AG04450 (cell line): ENCODE measurements at regions of chr5 and their contacts with region 1.

Region 1: DNA sequence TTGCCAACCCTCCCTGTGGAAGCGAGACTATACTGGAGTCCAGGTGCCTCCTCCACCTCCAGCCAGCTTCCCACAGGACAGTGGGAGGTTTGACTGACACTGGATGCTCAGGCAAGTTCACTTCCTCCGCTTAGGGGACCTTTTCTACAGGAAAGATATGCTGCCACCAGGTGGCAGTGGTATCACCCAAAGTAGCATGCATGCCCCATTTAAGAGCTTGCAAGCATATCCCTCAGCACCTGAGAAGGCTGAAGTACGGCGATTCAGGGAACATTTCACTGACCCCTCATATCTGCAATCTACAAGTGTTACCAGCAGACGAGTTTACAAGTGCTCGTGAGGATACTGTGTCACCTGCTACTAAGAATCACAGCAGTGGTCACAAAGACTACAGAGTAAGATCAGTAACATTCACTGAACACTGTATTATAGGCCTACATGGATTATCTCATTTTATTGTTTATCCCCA is 75.5 kb downstream of the KLHL3 start:
- DNase-seq: peak; percentile 67
- H3K4me3 ChIP-seq: no peak overlapping the region
- H3K27ac ChIP-seq: no peak overlapping the region
- H3K27me3 ChIP-seq: no peaks in the 10 kb centered on the region
- CTCF ChIP-seq: peak; percentile 86

Region 2: GRCh38 chr5:137619191-137619870 is 41.1 kb before region 1 on chr5:
- CTCF ChIA-PET with region 1: interaction called, 12 read pairs
- POLR2A ChIA-PET with region 1: no interaction called
- DNase-seq: peak; percentile 18
- H3K4me3 ChIP-seq: no peak overlapping the region
- H3K27ac ChIP-seq: no peak overlapping the region
- H3K27me3 ChIP-seq: no peaks in the 10 kb centered on the region
- CTCF ChIP-seq: no peak

Region 3: GRCh38 chr5:137635521-137635921 is 24.9 kb before region 1 on chr5:
- CTCF ChIA-PET with region 1: interaction called, 43 read pairs
- POLR2A ChIA-PET with region 1: no interaction called
- DNase-seq: no peak
- H3K4me3 ChIP-seq: no peak overlapping the region
- H3K27ac ChIP-seq: no peak overlapping the region
- H3K27me3 ChIP-seq: no peaks in the 10 kb centered on the region
- CTCF ChIP-seq: no peak

Region 4: GRCh38 chr5:137672019-137672418 is 11.6 kb after region 1 on chr5:
- CTCF ChIA-PET with region 1: interaction called, 43 read pairs
- POLR2A ChIA-PET with region 1: no interaction called
- DNase-seq: no peak
- H3K4me3 ChIP-seq: no peak overlapping the region
- H3K27ac ChIP-seq: no peak overlapping the region
- H3K27me3 ChIP-seq: no peaks in the 10 kb centered on the region
- CTCF ChIP-seq: no peak

Region 5: GRCh38 chr5:137712139-137712667 is 51.8 kb after region 1 on chr5:
- CTCF ChIA-PET with region 1: interaction called, 25 read pairs
- POLR2A ChIA-PET with region 1: no interaction called
- DNase-seq: no peak
- H3K4me3 ChIP-seq: no peak overlapping the region
- H3K27ac ChIP-seq: no peak overlapping the region
- H3K27me3 ChIP-seq: no peaks in the 10 kb centered on the region
- CTCF ChIP-seq: no peak

Region 6: DNA sequence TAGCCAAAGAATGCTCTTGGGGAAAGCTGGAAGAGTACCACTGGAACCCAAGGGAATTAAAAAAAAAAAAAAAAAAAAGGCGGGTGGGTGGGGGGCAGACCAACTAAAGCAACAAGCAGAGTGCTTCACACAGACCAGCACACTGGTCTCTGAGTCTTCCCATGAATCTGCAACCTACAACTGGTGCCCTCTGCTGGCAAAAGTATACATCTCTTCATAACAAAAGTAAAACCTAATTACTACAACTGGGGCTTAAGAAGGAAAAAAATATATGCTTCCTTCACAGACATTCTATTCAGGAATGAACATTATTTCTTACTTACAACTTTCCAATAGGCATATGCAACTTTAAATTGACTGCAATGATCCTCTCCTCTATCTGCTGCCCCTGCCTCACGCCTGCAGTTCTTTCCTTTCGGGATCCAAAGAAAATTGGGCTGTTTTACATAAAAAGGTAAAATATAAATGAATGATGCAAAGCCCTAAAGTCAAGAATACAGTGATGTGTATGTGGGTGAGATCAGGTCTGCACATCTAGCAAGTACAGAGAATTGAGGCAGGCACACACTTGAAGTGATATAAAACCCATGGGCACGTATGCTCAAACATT is 82.8 kb after region 1 on chr5:
- CTCF ChIA-PET with region 1: interaction called, 454 read pairs
- POLR2A ChIA-PET with region 1: interaction called, 4 read pairs
- DNase-seq: no peak
- H3K4me3 ChIP-seq: no peak overlapping the region
- H3K27ac ChIP-seq: no peak overlapping the region
- H3K27me3 ChIP-seq: no peaks in the 10 kb centered on the region
- CTCF ChIP-seq: peak; percentile 75

Region 7: DNA sequence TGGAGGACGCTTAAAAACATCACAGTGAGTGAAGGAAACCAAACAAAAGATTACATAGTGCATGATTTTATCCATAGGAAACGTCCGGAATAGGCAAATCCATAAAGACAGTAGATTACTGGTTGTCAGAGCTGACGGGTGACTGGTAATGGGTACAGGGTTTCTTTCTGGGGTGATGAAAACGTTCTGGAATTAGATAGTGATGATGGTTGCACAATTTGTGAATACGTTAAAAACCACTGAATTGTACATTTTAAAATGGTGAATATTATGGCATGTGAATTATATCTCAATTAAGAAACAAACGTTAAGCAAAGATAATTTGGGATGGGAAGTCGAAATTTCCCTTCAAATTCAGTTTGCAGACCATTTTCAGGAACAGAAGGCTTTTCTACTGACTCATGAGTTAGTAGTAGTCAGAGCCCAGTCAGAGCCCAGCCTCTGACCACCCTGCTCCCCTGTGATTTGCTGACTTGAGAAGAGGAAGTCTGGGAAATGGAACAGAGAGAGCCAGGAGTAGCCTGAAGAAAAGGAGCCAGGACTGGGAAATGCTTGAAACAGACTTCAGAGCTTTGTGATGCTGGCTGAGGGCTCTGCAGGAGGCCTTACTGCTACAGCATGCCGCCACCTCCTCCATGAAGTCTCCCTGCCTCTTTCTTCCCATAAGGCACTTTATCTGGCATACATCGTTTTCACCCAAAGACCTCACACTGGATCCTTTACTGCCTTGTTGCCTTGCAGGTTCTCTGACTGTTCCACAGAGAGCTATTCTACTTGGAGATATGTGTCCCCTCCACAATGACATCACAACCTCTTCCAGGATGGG is 1046.5 kb after region 1 on chr5:
- CTCF ChIA-PET with region 1: no interaction called
- POLR2A ChIA-PET with region 1: no interaction called
- DNase-seq: peak; percentile 54
- H3K4me3 ChIP-seq: no peak overlapping the region
- H3K27ac ChIP-seq: peak overlapping the region; percentile 42
- H3K27me3 ChIP-seq: peaks cover 5% of the 10 kb centered on the region
- CTCF ChIP-seq: no peak